ENCODE measurements at regions of chr1 and their contacts with region 1.

Region 1: DNA sequence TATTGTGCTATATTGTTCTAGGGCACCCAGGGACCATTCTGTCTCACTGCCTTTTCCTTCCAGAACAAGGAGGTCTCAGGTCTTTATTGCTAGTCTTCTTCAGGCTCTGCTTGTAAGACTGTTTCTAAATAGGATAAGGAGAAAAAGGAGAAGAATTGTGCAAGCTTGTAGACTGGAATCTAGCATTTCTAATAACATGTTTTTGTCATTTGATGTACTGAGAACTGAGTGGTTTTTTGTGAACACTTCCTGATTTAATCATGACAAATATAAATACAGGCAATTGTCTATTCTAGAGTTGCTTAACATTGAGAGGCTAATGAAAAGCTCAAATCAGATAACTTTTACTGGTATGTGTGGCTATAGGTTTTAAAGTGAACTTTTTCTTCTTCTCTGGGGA is 77.6 kb downstream of the CLIC4 start:
- DNase-seq: no peak
- ATAC-seq: no peak
- H3K4me3 ChIP-seq: no peak overlapping the region
- H3K27ac ChIP-seq: peak overlapping the region in 3 of 12 donors; percentile 2 to 54 (median 18)
- H3K4me1 ChIP-seq: peaks cover 0 to 57% (median 31%) of the 10 kb centered on the region in 12 donors
- H3K27me3 ChIP-seq: no peaks in the 10 kb centered on the region
- CTCF ChIP-seq: no peak
- POLR2A ChIP-seq: no peak

Region 2: DNA sequence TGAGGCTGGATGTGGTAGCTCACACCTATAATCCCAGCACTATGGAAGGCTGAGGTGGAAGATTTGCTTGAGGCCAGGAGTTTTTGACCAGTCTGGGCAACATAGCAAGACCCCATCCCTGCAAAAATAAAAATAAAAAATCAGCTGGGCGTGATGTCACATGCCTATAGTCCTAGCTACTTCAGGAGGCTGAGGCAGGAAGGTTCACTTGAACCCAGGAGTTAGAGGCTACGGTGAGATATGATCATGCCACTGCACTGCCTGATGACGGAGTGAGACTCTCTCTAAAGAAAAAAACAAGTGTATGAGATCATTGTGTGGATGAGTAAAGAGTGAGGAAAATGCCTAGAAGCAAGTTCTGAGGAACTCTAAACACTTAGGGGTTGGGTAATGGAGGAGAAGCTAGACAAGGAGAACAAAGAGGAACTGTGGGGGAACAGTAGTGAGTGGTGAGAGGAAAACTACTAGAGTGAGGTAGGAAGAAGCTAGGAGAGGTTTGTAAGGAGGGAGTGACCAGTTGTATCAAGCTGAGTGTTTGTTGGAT is 60.7 kb before region 1 on chr1:
- intact Hi-C with region 1: loop called in 1 of 10 experiments (anchors 5 kb)
- DNase-seq: no peak
- ATAC-seq: peak in 2 of 4 donors; percentile 38 to 71
- H3K4me3 ChIP-seq: peak overlapping the region in 1 of 12 donors; percentile 12
- H3K27ac ChIP-seq: peak overlapping the region in 4 of 12 donors; percentile 11 to 85 (median 31)
- H3K4me1 ChIP-seq: peaks cover 7 to 77% (median 46%) of the 10 kb centered on the region in 12 donors
- H3K27me3 ChIP-seq: no peaks in the 10 kb centered on the region
- CTCF ChIP-seq: no peak
- POLR2A ChIP-seq: no peak

Region 3: GRCh38 chr1:24769656-24770651 is 52.9 kb before region 1 on chr1:
- intact Hi-C with region 1: loop called in 1 of 10 experiments (anchors 10 kb)
- DNase-seq: no peak
- ATAC-seq: peak; percentile 62 to 91 (median 76)
- H3K4me3 ChIP-seq: peak overlapping the region in 4 of 12 donors; percentile 0 to 9 (median 4)
- H3K27ac ChIP-seq: peak overlapping the region; percentile 45 to 93 (median 88)
- H3K4me1 ChIP-seq: peaks cover 9 to 69% (median 52%) of the 10 kb centered on the region in 12 donors
- H3K27me3 ChIP-seq: no peaks in the 10 kb centered on the region
- CTCF ChIP-seq: no peak
- POLR2A ChIP-seq: no peak

Region 4: DNA sequence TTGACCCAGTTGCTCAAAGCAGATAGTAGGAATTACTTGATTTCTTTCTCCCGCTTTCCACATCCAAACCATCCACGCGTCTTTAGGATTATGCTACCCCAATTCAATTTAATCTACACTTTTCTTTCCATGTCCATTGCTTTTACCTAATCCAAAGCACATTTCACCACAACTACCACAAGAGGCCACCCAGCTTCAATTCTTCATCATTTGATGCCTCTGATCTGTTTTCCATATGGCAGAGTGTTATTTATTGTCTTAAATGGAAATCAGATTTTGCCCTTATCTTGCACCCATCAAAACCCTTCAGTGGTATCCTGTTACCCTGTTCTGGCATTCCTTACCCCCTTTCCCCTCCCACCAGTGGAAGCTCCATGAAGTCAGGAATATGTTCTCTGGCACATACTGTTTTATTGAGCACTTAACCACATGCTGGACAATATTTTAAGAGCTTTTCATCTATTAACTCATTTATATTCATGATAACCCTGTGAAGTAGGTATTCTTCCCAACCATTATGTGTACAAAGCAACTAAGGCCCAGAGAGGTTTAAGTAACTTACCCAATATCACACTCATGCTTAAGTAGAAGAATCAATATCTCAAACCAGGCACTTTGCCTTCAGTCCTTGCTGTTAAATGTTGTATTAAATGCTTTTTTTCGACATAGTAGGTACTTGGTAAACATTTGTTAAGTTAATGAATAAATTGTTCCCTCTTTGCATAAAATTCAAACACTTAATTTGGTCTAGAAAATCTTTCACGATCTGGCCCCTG is 43.0 kb before region 1 on chr1:
- intact Hi-C with region 1: loop called in 2 of 10 experiments (anchors 5 to 10 kb)
- DNase-seq: no peak
- ATAC-seq: no peak
- H3K4me3 ChIP-seq: no peak overlapping the region
- H3K27ac ChIP-seq: peak overlapping the region in 2 of 12 donors; percentile 20 to 48
- H3K4me1 ChIP-seq: peaks cover 0 to 75% (median 29%) of the 10 kb centered on the region in 12 donors
- H3K27me3 ChIP-seq: no peaks in the 10 kb centered on the region
- CTCF ChIP-seq: peak in 2 of 12 donors; percentile 19 to 22
- POLR2A ChIP-seq: no peak

Region 5: GRCh38 chr1:24841593-24841992 is 18.7 kb after region 1 on chr1:
- intact Hi-C with region 1: no loop called
- DNase-seq: no peak
- ATAC-seq: no peak
- H3K4me3 ChIP-seq: no peak overlapping the region
- H3K27ac ChIP-seq: no peak overlapping the region
- H3K4me1 ChIP-seq: peaks cover 0 to 5% (median 0%) of the 10 kb centered on the region in 12 donors
- H3K27me3 ChIP-seq: no peaks in the 10 kb centered on the region
- CTCF ChIP-seq: no peak
- POLR2A ChIP-seq: no peak

Measured in heart left ventricle (tissue), 16 donors.